Endothelial cell of umbilical vein (primary cell): ENCODE measurements at regions of chr1 and their contacts with region 1.

Region 1: GRCh38 chr1:47424336-47424982 is 8.4 kb downstream of the FOXE3 start:
- DNase-seq: peak; percentile 29
- H3K4me3 ChIP-seq: no peak overlapping the region
- H3K27ac ChIP-seq: no peak overlapping the region
- H3K4me1 ChIP-seq: no peaks in the 10 kb centered on the region
- H3K27me3 ChIP-seq: peaks cover 7 to 13% of the 10 kb centered on the region in 2 experiments
- CTCF ChIP-seq: peak; percentile 72 to 83
- POLR2A ChIP-seq: no peak

Region 2: GRCh38 chr1:47147047-47147785 is 277.2 kb before region 1 on chr1:
- CTCF ChIA-PET with region 1: no interaction called
- POLR2A ChIA-PET with region 1: no interaction called
- dilution Hi-C with region 1: no loop called
- intact Hi-C with region 1: no loop called
- DNase-seq: no peak
- H3K4me3 ChIP-seq: no peak overlapping the region
- H3K27ac ChIP-seq: no peak overlapping the region
- H3K4me1 ChIP-seq: no peaks in the 10 kb centered on the region
- H3K27me3 ChIP-seq: no peaks in the 10 kb centered on the region
- CTCF ChIP-seq: no peak
- POLR2A ChIP-seq: no peak

Region 3: DNA sequence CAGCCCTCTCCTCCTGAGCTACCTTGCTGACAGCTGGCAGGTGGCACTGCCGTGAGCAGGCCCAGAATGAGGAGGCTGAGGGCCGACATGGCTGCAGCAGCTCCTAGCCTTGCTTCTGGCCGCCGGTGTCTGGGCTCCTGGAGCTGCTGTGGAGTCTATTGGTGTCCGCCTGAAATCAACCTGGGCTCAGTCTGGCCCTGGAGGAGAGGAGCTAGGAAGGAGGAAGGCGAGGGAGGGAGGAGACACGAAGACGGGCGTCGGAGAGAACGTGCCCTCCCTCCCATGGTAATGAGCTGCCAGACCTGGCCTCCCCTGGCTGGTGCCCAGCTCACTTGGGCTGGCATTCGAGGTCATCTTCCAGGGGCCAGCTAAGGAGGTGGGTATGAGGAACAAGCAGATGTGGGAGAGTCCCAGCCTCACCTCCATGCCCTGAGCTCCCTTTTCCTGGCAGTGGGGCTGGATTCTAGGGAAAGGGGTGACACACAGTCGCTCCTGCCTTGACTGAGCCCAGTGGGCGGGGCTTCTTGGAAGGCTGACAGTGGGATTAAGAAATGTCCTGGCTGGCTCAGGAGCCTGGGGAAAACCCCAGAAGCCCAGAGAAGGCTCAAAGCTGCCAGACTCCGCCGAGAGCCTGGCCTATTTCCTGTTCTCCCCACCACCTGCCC is 234.5 kb before region 1 on chr1 and contains the start of gene PDZK1IP1:
- CTCF ChIA-PET with region 1: no interaction called
- POLR2A ChIA-PET with region 1: no interaction called
- dilution Hi-C with region 1: no loop called
- intact Hi-C with region 1: no loop called
- DNase-seq: peak; percentile 56
- H3K4me3 ChIP-seq: no peak within 1 kb of the TSS
- H3K27ac ChIP-seq: no peak within 1 kb of the TSS
- H3K4me1 ChIP-seq: peaks cover 5% of the 10 kb centered on the region
- H3K27me3 ChIP-seq: no peaks in the 10 kb centered on the region
- CTCF ChIP-seq: no peak
- POLR2A ChIP-seq: no peak
- total RNA-seq, gene PDZK1IP1: not detected in 2 replicates

Region 4: GRCh38 chr1:47388891-47389238 is 35.6 kb before region 1 on chr1:
- CTCF ChIA-PET with region 1: interaction called, 12 read pairs
- POLR2A ChIA-PET with region 1: no interaction called
- dilution Hi-C with region 1: no loop called
- intact Hi-C with region 1: loop called (anchors 2 kb)
- DNase-seq: peak; percentile 68
- H3K4me3 ChIP-seq: no peak overlapping the region
- H3K27ac ChIP-seq: no peak overlapping the region
- H3K4me1 ChIP-seq: no peaks in the 10 kb centered on the region
- H3K27me3 ChIP-seq: peaks cover 0 to 2% of the 10 kb centered on the region in 2 experiments
- CTCF ChIP-seq: peak; percentile 66 to 84
- POLR2A ChIP-seq: no peak

Region 5: GRCh38 chr1:47471163-47471562 is 46.7 kb after region 1 on chr1:
- CTCF ChIA-PET with region 1: no interaction called
- POLR2A ChIA-PET with region 1: no interaction called
- dilution Hi-C with region 1: no loop called
- intact Hi-C with region 1: no loop called
- DNase-seq: no peak
- H3K4me3 ChIP-seq: no peak overlapping the region
- H3K27ac ChIP-seq: no peak overlapping the region
- H3K4me1 ChIP-seq: no peaks in the 10 kb centered on the region
- H3K27me3 ChIP-seq: no peaks in the 10 kb centered on the region
- CTCF ChIP-seq: no peak
- POLR2A ChIP-seq: no peak